ENCODE measurements at regions of chr10 and their contacts with region 1.

Region 1: GRCh38 chr10:16314259-16314658 is 122.6 kb upstream of the PTER start:
- DNase-seq: no peak
- ATAC-seq: no peak
- H3K4me3 ChIP-seq: no peak overlapping the region
- H3K27ac ChIP-seq: no peak overlapping the region
- H3K4me1 ChIP-seq: no peaks in the 10 kb centered on the region
- H3K27me3 ChIP-seq: no peaks in the 10 kb centered on the region
- CTCF ChIP-seq: no peak

Region 2: DNA sequence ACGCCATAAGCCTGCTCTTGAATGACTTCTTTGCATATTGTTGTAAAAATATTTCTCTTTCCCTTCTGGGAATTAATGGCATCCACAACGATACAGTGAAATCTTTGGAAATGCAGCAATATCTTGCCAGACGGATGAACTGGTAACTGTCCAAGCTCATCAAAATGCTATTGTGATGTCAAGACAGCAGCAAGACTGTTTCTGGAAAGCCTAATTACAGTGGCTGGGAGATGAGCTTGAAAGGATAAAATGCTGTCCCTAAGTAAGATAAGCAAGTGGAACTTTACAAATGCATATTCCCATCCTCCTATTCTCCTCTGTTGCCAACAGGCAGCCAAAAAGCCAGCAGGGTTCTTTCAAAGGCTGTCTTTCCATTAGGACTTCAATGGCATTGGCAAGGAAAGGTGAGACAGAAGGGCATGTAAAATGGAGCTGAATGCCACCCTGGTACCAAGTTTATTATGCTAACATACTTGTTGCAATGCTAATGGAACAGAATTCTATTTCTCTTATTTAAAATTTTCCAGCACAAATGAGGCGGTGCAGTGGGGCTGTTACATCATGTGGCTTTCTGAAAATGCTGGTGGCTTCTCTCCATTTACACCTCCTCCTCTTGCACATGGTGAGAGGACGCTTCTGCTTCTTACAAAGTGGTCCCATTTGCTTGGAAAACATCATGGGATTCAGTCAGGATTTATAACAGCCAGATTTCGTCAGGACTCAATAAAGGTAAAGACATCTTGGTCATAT is 55.8 kb before region 1 on chr10:
- CTCF ChIA-PET with region 1: no interaction called
- POLR2A ChIA-PET with region 1: no interaction called
- intact Hi-C with region 1: no loop called
- DNase-seq: no peak
- ATAC-seq: no peak
- H3K4me3 ChIP-seq: no peak overlapping the region
- H3K27ac ChIP-seq: no peak overlapping the region
- H3K4me1 ChIP-seq: no peaks in the 10 kb centered on the region
- H3K27me3 ChIP-seq: no peaks in the 10 kb centered on the region
- CTCF ChIP-seq: no peak

Region 3: GRCh38 chr10:16545116-16545736 is 231.0 kb after region 1 on chr10:
- CTCF ChIA-PET with region 1: no interaction called
- POLR2A ChIA-PET with region 1: no interaction called
- intact Hi-C with region 1: loop called (anchors 10 kb)
- DNase-seq: peak; percentile 30
- ATAC-seq: no peak
- H3K4me3 ChIP-seq: no peak overlapping the region
- H3K27ac ChIP-seq: no peak overlapping the region
- H3K4me1 ChIP-seq: no peaks in the 10 kb centered on the region
- H3K27me3 ChIP-seq: no peaks in the 10 kb centered on the region
- CTCF ChIP-seq: peak; percentile 58

Region 4: GRCh38 chr10:16779384-16779915 is 465.2 kb after region 1 on chr10:
- CTCF ChIA-PET with region 1: no interaction called
- POLR2A ChIA-PET with region 1: no interaction called
- intact Hi-C with region 1: no loop called
- DNase-seq: no peak
- ATAC-seq: no peak
- H3K4me3 ChIP-seq: no peak overlapping the region
- H3K27ac ChIP-seq: no peak overlapping the region
- H3K4me1 ChIP-seq: no peaks in the 10 kb centered on the region
- H3K27me3 ChIP-seq: no peaks in the 10 kb centered on the region
- CTCF ChIP-seq: no peak

Region 5: GRCh38 chr10:16867556-16867955 is 553.3 kb after region 1 on chr10:
- CTCF ChIA-PET with region 1: no interaction called
- POLR2A ChIA-PET with region 1: no interaction called
- intact Hi-C with region 1: no loop called
- DNase-seq: peak; percentile 44
- ATAC-seq: peak; percentile 71
- H3K4me3 ChIP-seq: no peak overlapping the region
- H3K27ac ChIP-seq: no peak overlapping the region
- H3K4me1 ChIP-seq: peaks cover 8% of the 10 kb centered on the region; the same call in 1 of the 2 replicates
- H3K27me3 ChIP-seq: no peaks in the 10 kb centered on the region
- CTCF ChIP-seq: no peak

Measured in PC-3 (cell line).